ENCODE measurements at regions of chr2 and their contacts with region 1.

Region 1: DNA sequence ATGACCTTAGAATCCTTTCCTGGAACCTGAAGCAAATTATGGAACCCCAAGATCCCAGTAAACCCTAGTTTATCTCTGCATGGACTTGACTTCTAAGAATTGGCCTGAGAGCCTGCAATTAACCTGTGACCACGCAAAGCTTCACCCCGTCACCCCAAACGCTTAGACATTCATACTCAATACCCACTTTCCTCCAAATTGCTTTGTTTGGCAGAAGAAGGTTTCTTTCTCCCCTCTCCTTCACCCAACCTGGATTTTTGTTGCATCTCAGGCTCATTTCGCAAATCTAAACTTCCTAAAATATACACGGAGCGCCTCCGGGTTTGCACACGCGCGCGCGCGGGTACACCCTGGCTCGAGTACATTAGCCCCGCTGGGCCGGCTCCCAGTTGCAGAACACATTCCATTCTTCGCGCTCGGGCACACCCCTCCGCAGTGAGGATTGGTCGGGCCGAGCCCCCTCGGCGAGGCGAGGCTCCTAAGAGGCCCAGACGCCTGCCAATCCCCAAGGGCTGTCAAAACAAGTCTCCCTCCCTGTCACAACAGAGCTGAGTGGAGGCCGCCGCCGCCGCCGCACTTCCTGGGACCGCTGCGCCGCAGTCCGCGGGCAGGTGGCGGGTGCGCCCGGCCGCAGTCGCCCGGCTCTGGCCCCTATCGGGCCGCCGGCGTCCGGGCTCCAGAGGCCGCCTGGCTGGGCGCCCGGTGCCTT is at the start of gene PLCL1:
- DNase-seq: peak; percentile 92
- H3K4me3 ChIP-seq: peak within 1 kb of the TSS; percentile 65
- H3K27ac ChIP-seq: no peak within 1 kb of the TSS
- H3K4me1 ChIP-seq: no peaks in the 10 kb centered on the region
- H3K27me3 ChIP-seq: peaks cover 9% of the 10 kb centered on the region
- CTCF ChIP-seq: no peak
- total RNA-seq, gene PLCL1: 0.30 to 1.3 TPM

Region 2: DNA sequence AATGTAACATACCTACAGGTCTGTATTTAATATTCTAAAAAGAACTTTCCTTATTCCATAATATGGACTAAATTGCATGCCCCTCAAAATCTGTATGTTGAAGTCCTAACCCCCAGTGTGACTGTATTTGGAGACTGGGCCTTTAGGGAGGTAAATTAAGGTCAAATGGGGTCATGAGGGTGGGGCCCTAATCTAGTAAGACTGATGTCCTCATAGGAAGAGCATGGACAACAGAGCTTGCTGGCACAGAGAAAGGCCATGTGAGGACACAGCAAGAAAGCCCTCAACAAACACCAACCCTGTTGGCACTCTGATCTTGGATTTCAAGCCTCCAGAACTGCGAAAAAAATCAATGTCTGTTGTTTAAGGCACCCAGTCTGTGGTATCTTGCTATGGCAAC is 387.9 kb before region 1 on chr2:
- intact Hi-C with region 1: no loop called
- DNase-seq: no peak
- H3K4me3 ChIP-seq: no peak overlapping the region
- H3K27ac ChIP-seq: no peak overlapping the region
- H3K4me1 ChIP-seq: no peaks in the 10 kb centered on the region
- H3K27me3 ChIP-seq: no peaks in the 10 kb centered on the region
- CTCF ChIP-seq: no peak

Region 3: DNA sequence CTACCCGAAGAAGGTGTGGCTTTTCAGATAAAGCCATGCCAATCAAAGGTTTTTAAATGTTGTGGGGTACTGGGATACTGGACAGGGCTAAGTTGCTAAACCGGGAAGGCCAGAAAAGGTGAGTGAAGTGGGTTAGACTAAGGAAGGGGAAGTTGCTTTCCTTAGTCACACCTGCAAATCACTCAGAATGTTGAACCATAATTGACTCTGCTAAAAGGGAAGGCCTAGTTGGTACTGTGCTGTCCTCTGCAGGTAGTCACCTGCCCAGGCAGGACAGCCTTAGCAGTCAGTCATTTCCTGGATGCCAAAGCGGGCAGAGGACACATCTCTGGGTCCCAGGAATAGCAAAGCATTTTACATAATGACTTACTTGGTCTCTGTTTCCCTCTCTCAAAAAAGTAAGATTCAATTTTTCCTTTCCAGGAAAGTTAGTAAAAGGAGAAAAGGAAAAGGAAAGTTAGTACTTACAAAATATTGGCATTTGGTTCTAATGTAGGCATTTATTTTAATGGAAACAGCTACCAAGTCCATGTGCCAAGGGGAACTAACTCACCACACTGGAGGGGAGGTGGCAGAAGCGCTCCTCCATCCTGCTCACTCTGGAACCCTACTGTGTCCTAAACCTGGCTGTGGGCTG is 189.1 kb before region 1 on chr2:
- intact Hi-C with region 1: no loop called
- DNase-seq: peak; percentile 38
- H3K4me3 ChIP-seq: no peak overlapping the region
- H3K27ac ChIP-seq: peak overlapping the region; percentile 55
- H3K4me1 ChIP-seq: peaks cover 4% of the 10 kb centered on the region
- H3K27me3 ChIP-seq: no peaks in the 10 kb centered on the region
- CTCF ChIP-seq: peak; percentile 43

Region 4: DNA sequence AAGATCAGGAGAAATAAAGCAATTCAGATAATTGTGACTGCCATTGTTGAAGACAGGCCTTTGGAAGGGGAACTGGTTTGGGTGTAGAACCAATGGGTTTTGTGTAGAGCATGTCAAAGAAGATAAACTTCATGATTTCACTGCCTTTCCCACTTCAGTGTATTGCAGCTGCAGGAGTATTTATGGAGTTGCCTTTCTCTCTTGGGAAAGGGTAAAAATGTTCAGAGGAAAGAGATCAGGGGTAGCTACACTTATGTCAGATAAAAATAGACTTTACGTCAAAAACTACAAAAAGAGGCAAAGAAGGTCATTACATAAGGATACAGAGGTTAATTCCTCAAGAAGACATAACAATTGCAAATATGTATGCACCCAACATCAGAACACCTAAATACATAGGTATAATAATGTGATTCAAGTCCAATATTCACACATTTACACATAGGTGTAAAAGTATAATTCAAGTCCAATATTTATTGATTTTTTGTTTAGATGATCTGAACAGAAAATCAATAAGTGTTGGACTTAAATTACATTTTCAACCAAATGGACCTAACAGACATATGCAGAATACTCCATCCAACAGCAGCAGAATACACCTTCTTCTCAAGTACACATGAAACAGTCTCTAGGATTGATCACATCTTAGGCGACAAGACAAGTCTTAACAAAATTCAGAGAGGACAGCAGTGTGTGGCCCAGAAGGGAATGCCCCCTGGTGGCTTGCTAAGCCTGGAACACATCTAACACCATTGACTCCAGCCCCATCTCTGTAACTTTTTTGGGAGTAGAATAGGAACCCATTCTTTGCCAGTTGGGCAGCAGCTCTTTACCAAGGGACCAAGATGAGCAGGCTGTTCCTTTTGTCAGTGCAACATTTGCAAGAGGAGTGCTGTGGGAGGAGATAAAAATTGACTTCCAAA is 249.8 kb after region 1 on chr2:
- intact Hi-C with region 1: loop called (anchors 5 kb)
- DNase-seq: peak; percentile 20
- H3K4me3 ChIP-seq: no peak overlapping the region
- H3K27ac ChIP-seq: no peak overlapping the region
- H3K4me1 ChIP-seq: no peaks in the 10 kb centered on the region
- H3K27me3 ChIP-seq: no peaks in the 10 kb centered on the region
- CTCF ChIP-seq: peak; percentile 21

Region 5: GRCh38 chr2:198127627-198128026 is 323.4 kb after region 1 on chr2:
- intact Hi-C with region 1: loop called (anchors 5 kb)
- DNase-seq: peak; percentile 24
- H3K4me3 ChIP-seq: no peak overlapping the region
- H3K27ac ChIP-seq: no peak overlapping the region
- H3K4me1 ChIP-seq: no peaks in the 10 kb centered on the region
- H3K27me3 ChIP-seq: no peaks in the 10 kb centered on the region
- CTCF ChIP-seq: no peak

Region 6: GRCh38 chr2:198162276-198162675 is 358.1 kb after region 1 on chr2:
- intact Hi-C with region 1: no loop called
- DNase-seq: no peak
- H3K4me3 ChIP-seq: no peak overlapping the region
- H3K27ac ChIP-seq: no peak overlapping the region
- H3K4me1 ChIP-seq: no peaks in the 10 kb centered on the region
- H3K27me3 ChIP-seq: no peaks in the 10 kb centered on the region
- CTCF ChIP-seq: no peak

Region 7: GRCh38 chr2:198296665-198297308 is 492.6 kb after region 1 on chr2:
- intact Hi-C with region 1: loop called (anchors 2 kb)
- DNase-seq: peak; percentile 56
- H3K4me3 ChIP-seq: no peak overlapping the region
- H3K27ac ChIP-seq: no peak overlapping the region
- H3K4me1 ChIP-seq: no peaks in the 10 kb centered on the region
- H3K27me3 ChIP-seq: no peaks in the 10 kb centered on the region
- CTCF ChIP-seq: peak; percentile 78

Measured in colonic mucosa (tissue), 4 donors.